ENCODE measurements at regions of chr10 and their contacts with region 1.

Region 1: DNA sequence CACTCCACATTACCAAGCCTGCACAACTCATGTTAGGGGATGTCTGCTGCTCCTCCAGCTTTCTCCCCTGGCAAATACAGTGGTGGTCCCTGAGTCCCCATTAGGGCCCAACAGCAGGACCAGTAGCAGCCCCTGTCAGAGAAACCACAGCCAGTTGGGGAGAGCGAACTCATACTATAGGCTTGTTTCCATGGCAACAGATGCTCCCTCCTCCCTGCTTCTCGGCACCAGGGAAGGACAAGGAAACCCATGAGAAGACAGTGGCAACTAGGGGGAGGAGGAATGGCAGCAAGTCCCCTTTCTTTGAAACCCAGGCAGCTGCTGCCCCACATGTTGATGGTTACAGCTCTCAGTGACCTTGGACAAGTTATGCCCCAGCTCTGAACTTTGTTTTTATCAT is 326.4 kb downstream of the KCNMA1 start:
- DNase-seq: no peak
- ATAC-seq: no peak
- H3K4me3 ChIP-seq: no peak overlapping the region
- H3K27ac ChIP-seq: peak overlapping the region in 1 of 2 donors; percentile 91
- H3K4me1 ChIP-seq: peaks cover 0 to 10% of the 10 kb centered on the region in 2 donors
- H3K27me3 ChIP-seq: no peaks in the 10 kb centered on the region

Region 2: DNA sequence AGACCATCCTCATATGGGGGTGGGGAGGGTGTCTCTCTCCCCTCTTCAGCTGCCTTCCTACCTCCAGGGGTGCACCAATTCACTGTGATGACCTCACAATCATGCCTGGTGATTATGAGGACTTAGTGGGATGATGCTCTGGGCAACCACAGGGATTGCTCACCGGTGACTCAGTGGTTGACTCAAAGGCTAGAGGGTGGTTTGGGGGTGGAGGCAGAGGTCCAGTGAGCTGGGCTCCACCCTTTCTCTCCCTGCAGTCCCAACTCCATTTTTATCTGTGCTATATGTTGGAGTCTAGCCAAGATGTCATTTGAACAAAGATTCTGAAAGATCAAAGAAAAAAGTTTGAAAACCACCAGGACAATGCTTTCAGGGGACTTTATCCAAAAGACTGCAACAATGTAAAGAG is 39.5 kb after region 1 on chr10:
- intact Hi-C with region 1: loop called in 1 of 2 experiments (anchors 5 kb)
- DNase-seq: peak; percentile 83 to 91
- ATAC-seq: peak; percentile 86
- H3K4me3 ChIP-seq: no peak overlapping the region
- H3K27ac ChIP-seq: no peak overlapping the region
- H3K4me1 ChIP-seq: peaks cover 4 to 7% of the 10 kb centered on the region in 2 donors
- H3K27me3 ChIP-seq: no peaks in the 10 kb centered on the region